ENCODE measurements at regions of chr2 and their contacts with region 1.

Region 1: DNA sequence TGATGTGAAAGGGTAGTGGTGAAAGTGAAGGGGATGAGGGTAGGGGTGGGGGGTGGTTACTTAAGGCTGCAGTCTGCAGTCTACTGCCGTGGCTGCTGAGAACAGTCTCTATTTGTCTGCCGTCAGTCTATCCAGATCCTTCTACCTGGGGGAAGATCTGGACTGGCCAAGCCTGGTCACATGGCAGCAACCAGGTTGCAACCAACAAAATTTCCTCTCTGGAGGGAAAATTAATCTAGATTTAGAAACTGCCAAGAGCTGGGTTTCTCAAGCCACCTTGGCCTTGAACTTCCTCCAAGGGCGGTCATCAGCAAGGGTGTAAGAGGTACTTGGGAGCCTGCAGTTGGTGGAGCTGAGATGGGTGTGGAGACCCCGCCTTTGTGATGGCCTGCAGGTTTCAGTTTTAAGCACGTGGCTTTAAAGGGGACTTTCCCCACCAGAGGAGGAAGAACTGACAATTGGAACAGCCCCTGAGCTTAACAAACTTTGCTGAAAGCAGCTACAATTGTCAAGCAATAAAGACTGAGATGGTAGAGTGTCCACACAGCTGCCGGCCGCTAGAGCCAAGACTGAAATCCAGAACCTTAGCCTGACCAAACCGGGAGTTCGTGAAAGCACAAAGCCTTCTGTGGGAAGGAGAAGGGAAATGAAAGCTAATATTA is 31.4 kb upstream of the KCMF1 start:
- DNase-seq: no peak
- ATAC-seq: no peak
- H3K4me3 ChIP-seq: no peak overlapping the region
- H3K27ac ChIP-seq: no peak overlapping the region
- H3K4me1 ChIP-seq: no peaks in the 10 kb centered on the region; the same call in 1 of the 2 replicates
- H3K27me3 ChIP-seq: no peaks in the 10 kb centered on the region
- CTCF ChIP-seq: no peak
- POLR2A ChIP-seq: no peak
- RAD21 ChIP-seq: no peak

Region 2: DNA sequence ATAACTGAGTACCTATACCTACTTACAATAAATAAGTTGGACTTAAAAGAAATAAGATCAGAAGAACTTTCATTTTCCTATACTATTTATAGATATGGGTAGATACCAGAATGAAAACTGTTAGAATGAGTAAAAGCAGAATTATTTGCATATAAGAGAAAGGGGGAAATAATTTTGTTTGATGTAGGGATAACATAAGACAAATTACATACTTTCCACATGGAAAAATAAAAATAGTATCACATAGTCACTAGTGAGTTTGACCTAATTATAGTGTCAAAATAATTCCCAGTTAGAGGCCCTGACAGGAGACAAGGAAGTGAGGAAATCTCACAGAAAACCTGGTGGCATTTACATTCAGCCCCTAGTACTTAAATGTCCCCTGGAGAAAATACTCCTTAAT is 60.0 kb after region 1 on chr2:
- CTCF ChIA-PET with region 1: interaction called, 10 read pairs
- POLR2A ChIA-PET with region 1: no interaction called
- dilution Hi-C with region 1: no loop called
- in situ Hi-C with region 1: no loop called
- intact Hi-C with region 1: no loop called
- DNase-seq: no peak
- ATAC-seq: no peak
- H3K4me3 ChIP-seq: no peak overlapping the region
- H3K27ac ChIP-seq: no peak overlapping the region
- H3K4me1 ChIP-seq: peaks cover 8% of the 10 kb centered on the region
- H3K27me3 ChIP-seq: no peaks in the 10 kb centered on the region
- CTCF ChIP-seq: no peak
- POLR2A ChIP-seq: no peak
- RAD21 ChIP-seq: no peak

Measured in IMR-90 (cell line).